HepG2 (cell line): ENCODE measurements at regions of chr4 and their contacts with region 1.

Region 1: DNA sequence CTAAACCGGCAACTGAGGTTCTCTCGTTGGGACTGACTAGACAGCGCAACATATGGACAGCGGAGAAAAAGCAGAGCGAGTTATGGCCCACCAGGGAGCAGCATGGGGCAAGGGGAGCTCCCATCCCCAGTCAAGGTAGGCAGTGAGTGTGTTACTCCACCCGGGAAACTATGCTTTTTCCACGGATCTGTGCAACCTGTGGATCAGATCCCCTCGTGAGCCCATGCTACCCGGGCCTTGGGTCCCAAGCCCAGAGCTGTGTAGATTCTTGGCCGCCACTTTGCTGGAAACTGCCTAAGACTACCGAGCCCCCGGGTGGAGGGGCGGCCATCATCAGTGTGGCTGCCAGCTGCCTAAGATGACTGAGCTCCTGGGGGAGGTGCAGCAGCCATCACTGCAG is 140.9 kb downstream of the PAPSS1 start:
- DNase-seq: peak; percentile 50
- ATAC-seq: peak; percentile 100
- H3K4me3 ChIP-seq: peak overlapping the region; percentile 13 to 62 (median 56); a peak in 4 of 6 replicates
- H3K27ac ChIP-seq: no peak overlapping the region
- H3K4me1 ChIP-seq: no peaks in the 10 kb centered on the region; the same call in 1 of the 2 replicates
- H3K27me3 ChIP-seq: no peaks in the 10 kb centered on the region
- CTCF ChIP-seq: peak; percentile 89
- EP300 ChIP-seq: no peak
- POLR2A ChIP-seq: no peak
- RAD21 ChIP-seq: peak; percentile 83

Region 2: DNA sequence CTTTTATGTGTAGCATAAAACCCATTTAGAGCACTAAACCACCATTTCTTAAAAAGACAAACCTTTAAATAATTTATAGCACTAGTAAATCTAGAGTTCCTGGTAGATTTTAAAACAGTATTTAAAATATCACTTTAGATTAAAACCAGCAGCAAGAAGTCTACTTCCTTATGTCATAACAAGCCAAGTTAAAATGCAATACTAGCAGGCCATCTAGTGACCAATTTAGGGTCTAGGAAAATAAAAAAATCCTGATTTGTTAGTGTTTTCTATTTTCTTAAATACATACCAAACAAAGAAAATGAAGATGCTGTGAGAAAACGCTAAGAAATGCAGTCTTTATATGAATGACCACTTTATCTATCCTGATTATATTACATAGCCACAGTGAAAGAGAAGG is 87.0 kb after region 1 on chr4:
- CTCF ChIA-PET with region 1: interaction called, 5 read pairs
- POLR2A ChIA-PET with region 1: no interaction called
- in situ Hi-C with region 1: no loop called
- intact Hi-C with region 1: loop called (anchors 1 kb)
- DNase-seq: peak; percentile 10
- ATAC-seq: no peak
- H3K4me3 ChIP-seq: no peak overlapping the region
- H3K27ac ChIP-seq: no peak overlapping the region
- H3K4me1 ChIP-seq: no peaks in the 10 kb centered on the region
- H3K27me3 ChIP-seq: no peaks in the 10 kb centered on the region
- CTCF ChIP-seq: peak; percentile 46
- EP300 ChIP-seq: no peak
- POLR2A ChIP-seq: no peak
- RAD21 ChIP-seq: no peak

Region 3: DNA sequence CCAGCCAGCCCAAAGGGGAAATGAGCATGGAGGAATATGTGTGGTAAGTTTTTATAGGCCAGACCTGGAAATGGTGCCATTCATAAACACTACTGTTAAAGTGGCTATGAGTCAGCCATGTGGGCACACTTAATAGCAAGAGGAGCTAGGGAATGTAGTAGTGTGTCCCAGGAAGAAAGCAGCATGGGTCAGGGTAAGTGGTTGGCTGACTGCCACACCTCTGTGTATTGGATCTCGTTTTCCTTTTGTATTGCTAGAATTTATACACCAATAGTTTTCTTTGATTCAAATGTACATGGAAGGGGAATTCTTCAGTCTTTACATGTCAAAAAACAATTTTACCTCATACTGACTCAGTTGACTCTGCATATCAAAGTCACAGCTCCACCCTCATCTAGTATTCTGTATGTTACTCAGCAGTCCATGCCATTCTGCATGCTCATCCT is 222.7 kb after region 1 on chr4:
- CTCF ChIA-PET with region 1: no interaction called
- POLR2A ChIA-PET with region 1: no interaction called
- in situ Hi-C with region 1: no loop called
- intact Hi-C with region 1: no loop called
- DNase-seq: no peak
- ATAC-seq: no peak
- H3K4me3 ChIP-seq: no peak overlapping the region
- H3K27ac ChIP-seq: no peak overlapping the region
- H3K4me1 ChIP-seq: no peaks in the 10 kb centered on the region
- H3K27me3 ChIP-seq: no peaks in the 10 kb centered on the region
- CTCF ChIP-seq: no peak
- EP300 ChIP-seq: no peak
- POLR2A ChIP-seq: no peak
- RAD21 ChIP-seq: no peak

Region 4: DNA sequence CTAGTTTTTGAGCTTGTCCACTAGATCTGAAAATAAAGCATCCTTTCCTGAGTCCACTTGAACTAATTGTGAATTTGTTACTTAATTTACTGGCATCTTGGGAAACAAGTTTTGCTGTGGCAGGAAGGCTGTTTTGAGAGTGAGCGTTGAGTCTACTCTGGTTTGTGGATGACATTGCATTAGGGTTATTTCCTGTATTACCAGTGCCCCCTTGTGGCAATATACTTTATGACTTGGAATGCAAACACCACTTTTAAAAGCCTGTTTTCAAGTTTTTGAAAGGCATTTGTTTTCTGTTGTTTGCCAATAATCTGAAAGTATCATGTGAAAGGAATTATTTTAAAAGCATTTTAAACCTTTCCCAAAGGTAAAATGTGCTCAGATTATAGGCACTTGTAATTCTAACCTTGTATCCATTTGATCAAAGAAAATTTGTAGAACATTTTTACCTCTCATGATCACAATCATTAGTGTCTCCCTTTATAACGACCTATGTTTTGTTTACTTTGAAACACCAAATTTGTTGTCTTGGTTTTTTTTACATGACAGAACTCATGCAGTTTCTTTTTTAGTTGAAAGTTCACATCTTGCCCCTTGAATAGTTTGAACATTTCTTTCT is 334.3 kb after region 1 on chr4:
- CTCF ChIA-PET with region 1: no interaction called
- POLR2A ChIA-PET with region 1: no interaction called
- in situ Hi-C with region 1: no loop called
- intact Hi-C with region 1: loop called (anchors 5 kb)
- DNase-seq: peak; percentile 59
- ATAC-seq: peak; percentile 82
- H3K4me3 ChIP-seq: no peak overlapping the region
- H3K27ac ChIP-seq: no peak overlapping the region
- H3K4me1 ChIP-seq: no peaks in the 10 kb centered on the region
- H3K27me3 ChIP-seq: no peaks in the 10 kb centered on the region
- CTCF ChIP-seq: peak; percentile 80
- EP300 ChIP-seq: no peak
- POLR2A ChIP-seq: no peak
- RAD21 ChIP-seq: peak; percentile 77